Esophagus muscularis mucosa (tissue), 4 donors: ENCODE measurements at regions of chr18 and their contacts with region 1.

Region 1: DNA sequence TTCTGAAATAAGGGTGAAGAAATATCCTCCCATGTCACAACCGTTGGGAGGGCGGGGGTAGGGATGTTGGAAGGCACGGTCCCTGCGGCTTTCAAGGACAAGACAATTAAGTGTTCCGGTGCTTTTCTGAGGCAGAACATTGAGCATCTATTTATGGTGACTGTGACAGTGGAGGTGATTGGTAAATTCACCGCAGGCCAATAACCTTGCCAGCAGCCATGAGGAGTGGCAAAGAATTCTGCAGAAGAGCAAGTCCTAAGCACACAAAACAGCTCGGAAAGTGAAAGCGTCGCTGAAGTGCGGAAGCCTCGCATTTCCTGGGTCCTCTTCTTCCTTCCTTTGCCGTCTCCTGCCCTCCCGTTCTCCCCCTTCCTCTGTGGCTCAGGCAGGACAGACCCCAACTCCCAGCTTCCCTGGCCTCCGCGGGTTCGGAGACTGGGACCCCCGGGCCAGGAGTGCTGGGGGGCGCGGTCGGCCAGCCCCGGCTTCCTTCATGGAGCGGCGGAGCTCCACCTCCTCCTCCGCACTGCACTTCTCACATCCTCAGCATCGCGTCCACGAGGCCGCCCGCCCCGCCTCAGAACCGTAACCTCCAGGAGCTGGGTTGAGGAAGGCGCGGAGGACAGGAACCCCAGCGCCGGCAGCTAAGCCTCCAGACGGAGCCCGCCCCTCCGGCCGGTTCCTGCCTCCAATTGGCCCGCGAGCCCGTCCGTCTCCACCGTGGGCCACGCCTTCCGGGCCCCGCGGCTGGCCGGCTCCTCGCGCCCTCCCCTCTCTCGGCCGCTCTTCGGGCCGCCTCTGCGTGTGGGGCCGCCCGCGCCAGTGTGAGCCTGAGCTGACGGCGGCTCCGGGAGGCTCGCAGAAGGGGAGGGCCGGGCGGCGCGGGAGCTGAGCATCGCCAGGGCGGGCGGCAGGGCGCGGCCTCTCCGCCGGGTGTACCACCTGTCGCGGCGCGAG is at the start of gene ME2:
- DNase-seq: peak; percentile 96
- H3K4me3 ChIP-seq: peak within 1 kb of the TSS; percentile 78 to 94 (median 84)
- H3K27ac ChIP-seq: peak within 1 kb of the TSS; percentile 95 to 97 (median 97)
- H3K4me1 ChIP-seq: peaks cover 7 to 37% (median 19%) of the 10 kb centered on the region in 4 donors
- H3K27me3 ChIP-seq: no peaks in the 10 kb centered on the region
- CTCF ChIP-seq: no peak
- EP300 ChIP-seq: no peak
- POLR2A ChIP-seq: peak; percentile 85
- total RNA-seq, gene ME2: 46.1 to 62.8 (median 55.0) TPM

Region 2: DNA sequence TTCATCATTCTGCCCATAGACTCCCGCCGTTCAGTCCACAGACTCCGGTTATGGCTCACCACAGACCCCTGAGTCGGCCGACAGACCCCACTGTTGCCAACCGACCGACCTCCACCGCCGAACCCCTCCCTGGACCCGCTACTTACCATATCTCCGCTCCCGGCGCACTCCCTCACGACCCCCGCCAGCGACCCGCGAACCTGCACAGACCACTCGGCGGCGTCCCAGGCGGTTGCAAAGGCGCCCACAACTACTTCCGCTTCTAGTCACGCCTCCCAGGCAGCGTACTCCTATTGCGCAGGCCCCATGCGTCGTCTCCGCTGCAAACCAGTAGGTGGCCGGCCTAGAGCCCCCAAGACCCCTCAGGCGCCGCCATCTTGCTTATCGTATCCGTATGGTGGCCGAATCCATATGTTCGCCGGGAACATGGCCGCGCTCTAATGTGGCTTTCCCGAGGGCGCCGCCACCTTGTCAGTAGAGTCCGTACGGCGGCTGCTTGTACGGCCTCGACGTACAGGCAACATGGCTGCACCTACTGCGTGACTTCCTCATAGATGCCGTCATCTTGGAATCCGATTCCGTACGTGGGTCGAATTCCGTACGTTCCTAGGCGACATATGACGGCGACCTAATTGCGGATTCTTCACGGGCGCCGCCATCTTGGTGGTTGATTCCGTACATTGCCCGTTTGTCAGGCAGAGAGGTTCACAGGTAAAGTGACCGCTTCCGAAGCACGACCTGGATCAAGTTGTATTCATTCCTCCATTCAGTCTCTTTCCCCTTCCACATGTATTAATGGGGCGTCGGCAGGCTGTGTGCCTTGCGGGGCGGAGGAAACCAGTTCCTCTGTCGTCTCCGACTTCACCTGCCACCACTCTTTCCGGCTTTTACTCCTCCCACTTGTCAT is 590.9 kb before region 1 on chr18 and contains the start of gene CXXC1:
- intact Hi-C with region 1: loop called (anchors 10 kb)
- DNase-seq: peak; percentile 99
- H3K4me3 ChIP-seq: peak within 1 kb of the TSS; percentile 66 to 84 (median 76)
- H3K27ac ChIP-seq: peak within 1 kb of the TSS; percentile 82 to 88 (median 87)
- H3K4me1 ChIP-seq: peaks cover 5 to 18% (median 16%) of the 10 kb centered on the region in 4 donors
- H3K27me3 ChIP-seq: no peaks in the 10 kb centered on the region
- CTCF ChIP-seq: peak; percentile 33 to 58 (median 46)
- EP300 ChIP-seq: no peak
- POLR2A ChIP-seq: no peak
- total RNA-seq, gene CXXC1: 38.6 to 58.1 (median 49.2) TPM

Region 3: GRCh38 chr18:50797142-50797541 is 81.5 kb before region 1 on chr18:
- intact Hi-C with region 1: no loop called
- DNase-seq: peak; percentile 68
- H3K4me3 ChIP-seq: no peak overlapping the region
- H3K27ac ChIP-seq: no peak overlapping the region
- H3K4me1 ChIP-seq: no peaks in the 10 kb centered on the region
- H3K27me3 ChIP-seq: no peaks in the 10 kb centered on the region
- CTCF ChIP-seq: no peak
- EP300 ChIP-seq: no peak
- POLR2A ChIP-seq: no peak

Region 4: GRCh38 chr18:50819728-50820378 is 58.8 kb before region 1 on chr18 and contains the start of gene MRO:
- intact Hi-C with region 1: loop called (anchors 5 kb)
- DNase-seq: peak; percentile 96
- H3K4me3 ChIP-seq: peak within 1 kb of the TSS; percentile 40 to 58 (median 42)
- H3K27ac ChIP-seq: peak within 1 kb of the TSS in 3 of 4 donors; percentile 34 to 55 (median 38)
- H3K4me1 ChIP-seq: peaks cover 20 to 35% (median 29%) of the 10 kb centered on the region in 4 donors
- H3K27me3 ChIP-seq: no peaks in the 10 kb centered on the region
- CTCF ChIP-seq: peak in 2 of 3 experiments; percentile 93 to 94
- EP300 ChIP-seq: peak; percentile 70
- POLR2A ChIP-seq: no peak
- total RNA-seq, gene MRO: 0.52 to 1.4 (median 0.83) TPM

Region 5: DNA sequence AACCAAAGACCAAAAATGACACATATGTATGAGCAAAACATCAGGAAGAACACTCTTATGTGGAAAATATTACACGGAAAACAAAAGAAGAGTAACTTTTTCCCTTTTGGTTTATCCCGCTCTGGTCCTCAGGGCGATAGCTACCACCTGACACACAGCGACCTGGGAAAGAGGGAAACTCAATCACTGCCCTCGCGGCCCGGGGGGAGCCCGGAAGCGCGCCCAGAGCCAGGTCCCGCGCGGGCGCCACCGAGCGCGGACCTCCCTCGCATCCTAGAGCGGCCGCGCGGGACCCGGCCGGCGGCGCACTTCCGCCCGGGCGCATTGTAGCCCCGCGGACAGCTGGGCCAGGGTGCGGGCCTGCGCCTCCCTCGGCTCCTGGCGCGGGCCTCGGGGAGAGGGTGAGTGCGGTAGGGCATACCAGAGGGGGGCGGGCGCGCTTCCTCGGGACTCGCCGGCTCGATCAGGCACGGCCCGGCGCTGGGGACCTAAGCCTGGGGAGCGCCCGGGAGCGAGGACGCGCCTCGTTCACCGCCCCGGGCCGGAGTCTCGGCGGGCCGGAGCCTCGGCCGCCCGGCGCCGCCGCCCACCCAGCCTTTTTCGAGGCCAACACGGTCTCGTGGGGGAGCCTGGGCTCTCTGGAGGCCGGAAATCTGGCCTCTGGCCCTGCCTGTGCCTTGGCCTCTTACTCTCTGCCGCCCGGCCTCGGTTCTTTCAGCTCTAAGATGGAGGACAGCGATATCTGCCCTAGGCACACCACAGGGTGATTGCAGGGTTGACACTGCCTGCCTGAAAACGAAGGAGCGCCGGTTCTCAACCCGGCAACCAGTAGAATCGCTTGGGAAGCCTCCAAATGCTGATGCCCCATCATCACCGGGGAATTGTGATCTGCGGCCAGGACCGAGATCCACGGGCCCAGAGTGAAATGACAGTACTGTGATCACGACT is 89.4 kb after region 1 on chr18 and contains the start of gene ELAC1:
- intact Hi-C with region 1: loop called (anchors 5 kb)
- DNase-seq: peak; percentile 95
- H3K4me3 ChIP-seq: peak within 1 kb of the TSS; percentile 77 to 97 (median 94)
- H3K27ac ChIP-seq: peak within 1 kb of the TSS; percentile 95 to 99 (median 98)
- H3K4me1 ChIP-seq: peaks cover 13 to 23% (median 20%) of the 10 kb centered on the region in 4 donors
- H3K27me3 ChIP-seq: no peaks in the 10 kb centered on the region
- CTCF ChIP-seq: peak in 1 of 3 experiments; percentile 14
- EP300 ChIP-seq: no peak
- POLR2A ChIP-seq: peak; percentile 89
- total RNA-seq, gene ELAC1: 3.7 to 7.9 (median 4.0) TPM

Region 6: DNA sequence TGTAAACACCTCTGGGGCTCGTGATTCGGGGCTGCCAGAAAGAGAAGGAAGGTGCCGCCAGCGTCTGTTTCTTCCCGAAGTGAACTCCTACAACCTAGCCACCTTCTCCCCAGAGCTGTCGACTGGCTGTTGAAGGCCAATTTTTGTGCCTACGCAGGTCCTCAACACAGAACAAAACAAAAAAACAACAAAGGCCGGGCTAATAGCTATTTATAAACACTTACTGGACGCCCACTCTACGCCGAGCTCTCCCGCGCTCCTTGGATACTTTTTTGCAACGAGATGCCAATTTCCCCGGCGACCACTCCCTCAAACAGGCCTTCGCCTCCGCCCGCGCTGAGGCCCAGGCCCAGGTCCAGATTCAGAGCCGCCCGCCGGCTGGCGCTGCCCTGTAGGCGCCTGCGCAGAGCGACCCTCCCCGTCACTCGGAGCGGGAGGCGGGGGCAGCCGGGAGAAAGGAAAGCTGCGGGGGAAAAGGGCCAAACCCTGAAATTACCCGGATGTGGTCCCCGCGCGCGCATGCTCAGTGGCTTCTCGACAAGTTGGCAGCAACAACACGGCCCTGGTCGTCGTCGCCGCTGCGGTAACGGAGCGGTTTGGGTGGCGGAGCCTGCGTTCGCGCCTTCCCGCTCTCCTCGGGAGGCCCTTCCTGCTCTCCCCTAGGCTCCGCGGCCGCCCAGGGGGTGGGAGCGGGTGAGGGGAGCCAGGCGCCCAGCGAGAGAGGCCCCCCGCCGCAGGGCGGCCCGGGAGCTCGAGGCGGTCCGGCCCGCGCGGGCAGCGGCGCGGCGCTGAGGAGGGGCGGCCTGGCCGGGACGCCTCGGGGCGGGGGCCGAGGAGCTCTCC is 151.3 kb after region 1 on chr18 and contains the start of gene SMAD4:
- intact Hi-C with region 1: loop called (anchors 5 kb)
- DNase-seq: peak; percentile 99
- H3K4me3 ChIP-seq: peak within 1 kb of the TSS; percentile 60 to 94 (median 82)
- H3K27ac ChIP-seq: peak within 1 kb of the TSS; percentile 96 to 100 (median 98)
- H3K4me1 ChIP-seq: peaks cover 37 to 75% (median 59%) of the 10 kb centered on the region in 4 donors
- H3K27me3 ChIP-seq: no peaks in the 10 kb centered on the region
- CTCF ChIP-seq: no peak
- EP300 ChIP-seq: no peak
- POLR2A ChIP-seq: peak; percentile 62
- total RNA-seq, gene SMAD4: 113 to 168 (median 130) TPM

Region 7: DNA sequence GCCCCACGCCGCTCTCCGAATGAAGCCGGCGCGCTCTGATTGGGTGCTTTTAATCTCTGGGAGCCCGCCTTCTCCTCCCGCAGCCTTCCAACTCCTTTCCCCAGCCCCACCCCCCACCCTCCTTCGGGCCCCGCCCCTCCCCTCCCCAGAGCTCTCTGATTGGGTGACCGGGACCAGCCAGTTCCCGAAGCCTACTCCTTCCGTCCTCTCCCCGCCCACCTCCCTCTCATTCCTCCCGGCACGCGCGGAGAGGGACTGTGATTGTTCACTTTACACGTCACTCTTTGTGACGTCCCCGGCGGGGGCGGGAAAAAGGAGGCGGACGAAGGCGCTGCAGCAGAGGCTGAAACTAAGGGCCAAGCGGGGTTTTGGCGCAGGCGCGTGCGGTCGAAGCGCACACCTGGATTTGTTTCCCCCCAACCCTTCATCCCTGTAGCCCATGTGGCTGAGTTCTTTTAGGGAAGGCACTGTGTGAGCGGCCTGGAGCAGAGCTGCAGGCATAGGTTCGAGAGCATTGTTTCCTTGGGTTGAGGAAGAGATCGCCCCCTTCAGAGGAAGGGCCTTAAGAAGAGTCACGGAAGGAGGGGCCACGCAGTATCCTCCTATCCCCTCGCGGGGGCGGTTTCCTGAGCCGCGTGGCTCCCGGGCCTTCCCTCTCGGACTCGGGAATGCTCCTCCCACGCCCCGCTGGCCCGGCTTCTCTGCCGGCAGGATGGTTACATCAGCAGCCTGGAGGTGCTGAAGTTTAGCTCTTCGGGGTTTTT is 319.2 kb after region 1 on chr18 and contains the start of gene MEX3C:
- intact Hi-C with region 1: loop called (anchors 10 kb)
- DNase-seq: peak; percentile 100
- H3K4me3 ChIP-seq: peak within 1 kb of the TSS; percentile 69 to 91 (median 78)
- H3K27ac ChIP-seq: peak within 1 kb of the TSS; percentile 97 to 99 (median 98)
- H3K4me1 ChIP-seq: peaks cover 21 to 37% (median 34%) of the 10 kb centered on the region in 4 donors
- H3K27me3 ChIP-seq: no peaks in the 10 kb centered on the region
- CTCF ChIP-seq: peak in 2 of 3 experiments; percentile 22 to 36
- EP300 ChIP-seq: no peak
- POLR2A ChIP-seq: no peak
- total RNA-seq, gene MEX3C: 22.8 to 38.0 (median 30.3) TPM

Region 8: DNA sequence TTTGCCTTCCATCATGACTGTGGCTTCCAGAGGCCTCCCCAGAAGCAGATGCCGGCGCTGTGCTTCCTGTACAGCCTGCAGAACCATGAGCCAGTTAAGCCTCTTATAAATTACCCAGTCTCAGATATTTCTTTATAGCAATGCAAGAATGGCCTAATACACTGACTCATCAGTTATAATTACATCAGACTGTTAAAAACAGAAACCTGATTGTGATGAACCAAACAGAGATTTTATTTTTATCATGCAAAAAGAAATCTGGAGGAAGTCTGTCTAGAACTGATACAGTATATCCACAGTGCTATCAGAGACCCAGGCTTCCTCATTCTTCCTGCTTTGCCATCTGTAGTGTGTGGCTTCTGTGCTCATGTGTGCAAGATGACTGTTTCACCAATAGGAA is 412.2 kb after region 1 on chr18:
- intact Hi-C with region 1: no loop called
- DNase-seq: no peak
- H3K4me3 ChIP-seq: no peak overlapping the region
- H3K27ac ChIP-seq: no peak overlapping the region
- H3K4me1 ChIP-seq: no peaks in the 10 kb centered on the region
- H3K27me3 ChIP-seq: no peaks in the 10 kb centered on the region
- CTCF ChIP-seq: no peak
- EP300 ChIP-seq: no peak
- POLR2A ChIP-seq: no peak